ENCODE measurements at regions of chr15 and their contacts with region 1.

Region 1: DNA sequence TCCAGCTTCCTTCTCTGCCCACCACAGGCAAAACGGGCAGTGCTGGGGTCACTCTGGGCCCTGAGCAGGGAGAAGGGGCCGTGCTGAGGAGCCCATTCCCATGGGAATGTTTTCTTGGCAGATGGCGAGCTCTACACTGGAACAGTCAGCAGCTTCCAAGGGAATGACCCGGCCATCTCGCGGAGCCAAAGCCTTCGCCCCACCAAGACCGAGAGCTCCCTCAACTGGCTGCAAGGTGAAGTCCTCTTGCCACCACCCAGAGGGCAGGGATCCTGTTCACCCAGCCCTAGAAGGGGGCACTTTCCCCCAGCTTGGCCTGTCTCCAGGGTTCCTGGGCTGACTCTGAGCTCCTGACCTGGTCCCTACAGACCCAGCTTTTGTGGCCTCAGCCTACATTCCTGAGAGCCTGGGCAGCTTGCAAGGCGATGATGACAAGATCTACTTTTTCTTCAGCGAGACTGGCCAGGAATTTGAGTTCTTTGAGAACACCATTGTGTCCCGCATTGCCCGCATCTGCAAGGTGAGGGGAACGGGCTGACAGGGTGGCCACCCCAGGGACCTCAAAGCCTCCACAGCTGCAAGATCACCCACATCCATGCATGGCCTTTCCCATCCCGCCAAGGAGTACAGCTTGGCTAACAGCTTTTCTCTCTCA is 12.4 kb downstream of the CIB1 start:
- DNase-seq: peak; percentile 81
- ATAC-seq: peak; percentile 93
- H3K4me3 Mint-ChIP-seq: no peak overlapping the region
- H3K27ac Mint-ChIP-seq: no peak overlapping the region
- H3K4me1 Mint-ChIP-seq: peaks cover 5% of the 10 kb centered on the region
- H3K27me3 Mint-ChIP-seq: no peaks in the 10 kb centered on the region
- CTCF ChIP-seq: peak; percentile 35; the same call in 1 of the 2 replicates

Region 2: DNA sequence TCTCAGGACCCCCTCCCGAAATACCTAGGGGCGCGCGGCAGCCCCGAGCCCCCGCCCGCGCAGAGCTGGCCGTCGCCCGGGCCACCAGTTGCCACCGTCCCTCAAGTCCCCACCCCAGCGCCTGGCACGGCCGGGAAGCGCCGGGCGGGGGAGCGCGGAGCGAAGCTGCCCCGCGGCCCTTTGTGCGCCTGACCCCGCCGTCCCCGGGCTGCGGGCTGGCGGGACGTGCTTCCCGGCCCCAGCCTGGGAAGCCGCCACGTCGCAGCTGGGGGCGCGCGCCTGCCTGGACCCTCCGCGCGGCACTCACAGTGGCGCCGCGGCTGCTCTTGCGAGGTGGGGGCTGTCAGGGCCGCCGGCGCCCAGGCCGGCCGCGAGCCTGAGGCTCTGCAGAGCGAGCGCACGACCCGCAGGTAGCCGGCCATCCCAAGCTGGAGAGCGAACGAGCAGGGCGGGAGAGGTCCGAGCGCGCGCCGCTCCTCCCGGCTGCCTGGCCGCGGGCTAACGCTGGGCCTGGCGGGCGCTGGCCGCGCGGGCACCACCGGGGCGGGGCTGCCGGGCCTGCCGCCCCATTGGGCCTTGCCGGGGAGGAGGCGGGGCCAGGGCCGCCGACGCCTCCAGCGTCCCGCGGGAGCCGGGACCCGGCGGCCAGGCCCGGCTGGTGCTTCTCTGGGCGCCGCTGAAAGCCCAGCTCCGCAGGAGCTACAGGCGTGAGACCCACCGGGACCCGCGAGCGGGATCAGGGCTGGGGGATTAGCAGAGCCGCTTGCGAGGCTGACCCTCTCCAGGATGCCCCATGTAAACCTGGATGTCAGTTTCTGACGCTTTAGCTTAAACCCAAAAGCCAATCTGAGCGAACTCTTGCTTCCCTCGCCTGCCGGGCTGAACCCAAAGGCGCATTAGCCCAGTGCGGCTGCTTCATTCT is 119.1 kb before region 1 on chr15 and contains the start of gene IDH2:
- CTCF ChIA-PET with region 1: interaction called, 11 read pairs
- POLR2A ChIA-PET with region 1: interaction called, 4 read pairs
- DNase-seq: peak; percentile 82
- ATAC-seq: peak; percentile 91
- H3K4me3 Mint-ChIP-seq: peak within 1 kb of the TSS; percentile 79
- H3K27ac Mint-ChIP-seq: no peak within 1 kb of the TSS
- H3K4me1 Mint-ChIP-seq: peaks cover 42% of the 10 kb centered on the region
- H3K27me3 Mint-ChIP-seq: peaks cover 41% of the 10 kb centered on the region
- CTCF ChIP-seq: no peak
- total RNA-seq, gene IDH2: 53.3 to 80.3 TPM (median 72.3 TPM) in 3 replicates

Region 3: GRCh38 chr15:90151989-90152645 is 69.3 kb before region 1 on chr15:
- CTCF ChIA-PET with region 1: interaction called, 110 read pairs
- POLR2A ChIA-PET with region 1: interaction called, 12 read pairs
- DNase-seq: peak; percentile 70
- ATAC-seq: peak; percentile 94
- H3K4me3 Mint-ChIP-seq: peak overlapping the region; percentile 10
- H3K27ac Mint-ChIP-seq: peak overlapping the region; percentile 97
- H3K4me1 Mint-ChIP-seq: peaks cover 42% of the 10 kb centered on the region
- H3K27me3 Mint-ChIP-seq: peaks cover 13% of the 10 kb centered on the region
- CTCF ChIP-seq: no peak

Region 4: GRCh38 chr15:90201130-90201949 is 20.0 kb before region 1 on chr15 and contains the start of gene SEMA4B:
- CTCF ChIA-PET with region 1: interaction called, 62 read pairs
- POLR2A ChIA-PET with region 1: no interaction called
- DNase-seq: peak; percentile 83
- ATAC-seq: peak; percentile 86
- H3K4me3 Mint-ChIP-seq: peak within 1 kb of the TSS; percentile 78
- H3K27ac Mint-ChIP-seq: peak within 1 kb of the TSS; percentile 60
- H3K4me1 Mint-ChIP-seq: peaks cover 20% of the 10 kb centered on the region
- H3K27me3 Mint-ChIP-seq: no peaks in the 10 kb centered on the region; the same call in 1 of the 2 replicates
- CTCF ChIP-seq: no peak
- total RNA-seq, gene SEMA4B: 50.1 to 53.3 TPM (median 50.2 TPM) in 3 replicates

Region 5: DNA sequence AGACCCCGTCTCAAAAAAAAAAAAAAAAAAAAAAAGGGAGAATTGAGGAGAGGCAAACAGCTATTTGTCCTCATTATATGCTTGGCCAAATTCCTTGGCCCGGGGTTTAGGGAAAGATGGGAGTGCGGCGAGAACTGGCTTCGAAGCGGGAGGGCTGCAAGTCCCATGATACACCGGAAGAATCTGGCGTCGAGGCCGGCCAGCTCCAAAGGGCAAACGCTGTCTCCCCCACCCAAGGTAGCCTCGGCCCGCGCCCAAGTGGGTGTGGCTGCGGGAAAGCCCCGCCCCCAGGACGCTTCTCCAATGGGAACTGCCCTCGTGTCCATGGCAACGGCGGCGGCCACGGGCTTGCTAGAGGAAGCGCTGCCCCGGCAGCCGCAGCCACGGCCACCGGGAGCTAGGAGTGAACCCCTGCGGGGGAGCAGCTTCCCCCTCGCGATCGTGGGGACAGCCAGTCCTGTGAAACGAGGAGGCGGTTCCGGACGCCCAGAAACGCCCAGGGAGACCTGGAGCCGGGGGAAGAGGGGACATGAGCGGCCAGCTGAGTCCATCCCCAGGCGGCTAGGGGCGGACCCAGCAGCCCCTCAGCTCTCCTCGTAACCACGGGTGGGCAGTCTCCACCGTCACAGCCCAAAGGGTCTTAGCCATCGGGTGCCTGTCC is 28.0 kb after region 1 on chr15 and contains the start of gene TTLL13:
- CTCF ChIA-PET with region 1: interaction called, 19 read pairs
- POLR2A ChIA-PET with region 1: no interaction called
- DNase-seq: peak; percentile 82
- ATAC-seq: peak; percentile 95
- H3K4me3 Mint-ChIP-seq: peak within 1 kb of the TSS; percentile 72
- H3K27ac Mint-ChIP-seq: no peak within 1 kb of the TSS; the same call in 1 of the 2 replicates
- H3K4me1 Mint-ChIP-seq: peaks cover 8% of the 10 kb centered on the region; the same call in 1 of the 2 replicates
- H3K27me3 Mint-ChIP-seq: peaks cover 16% of the 10 kb centered on the region
- CTCF ChIP-seq: no peak
- total RNA-seq, gene TTLL13: 0.18 to 0.76 TPM (median 0.48 TPM) in 3 replicates

Measured in WTC11 (cell line).